Adrenal gland (tissue), 19 donors: ENCODE measurements at regions of chr10 and their contacts with region 1.

Region 1: DNA sequence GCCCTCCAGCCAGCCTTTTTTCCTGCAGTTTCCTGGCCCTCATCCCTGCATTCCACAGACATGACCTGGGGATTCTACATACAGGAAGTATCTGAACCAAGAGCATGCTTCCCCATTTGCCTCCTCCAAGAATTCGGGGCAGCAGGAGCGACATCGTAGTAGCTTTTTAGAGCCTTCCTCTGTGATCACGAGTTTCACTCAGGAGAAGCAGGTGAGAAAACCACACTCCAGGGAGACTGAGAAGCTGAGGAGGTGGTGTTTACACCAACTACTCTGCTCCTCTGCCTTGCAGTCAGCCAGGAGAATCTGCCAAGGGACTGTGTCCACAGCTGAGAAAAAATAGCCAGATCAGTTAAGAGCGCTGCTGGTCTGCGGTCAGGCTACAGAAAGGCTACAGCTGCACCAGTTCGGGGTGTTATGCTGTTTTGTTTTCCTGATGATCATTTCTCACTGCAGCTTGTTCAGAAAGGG is 54.1 kb downstream of the HSPA12A start:
- DNase-seq: no peak
- H3K4me3 ChIP-seq: no peak overlapping the region
- H3K27ac ChIP-seq: peak overlapping the region in 2 of 5 donors; percentile 11 to 13
- H3K4me1 ChIP-seq: peaks cover 0 to 23% of the 10 kb centered on the region in 2 donors
- H3K27me3 ChIP-seq: no peaks in the 10 kb centered on the region
- CTCF ChIP-seq: no peak
- POLR2A ChIP-seq: no peak

Region 2: DNA sequence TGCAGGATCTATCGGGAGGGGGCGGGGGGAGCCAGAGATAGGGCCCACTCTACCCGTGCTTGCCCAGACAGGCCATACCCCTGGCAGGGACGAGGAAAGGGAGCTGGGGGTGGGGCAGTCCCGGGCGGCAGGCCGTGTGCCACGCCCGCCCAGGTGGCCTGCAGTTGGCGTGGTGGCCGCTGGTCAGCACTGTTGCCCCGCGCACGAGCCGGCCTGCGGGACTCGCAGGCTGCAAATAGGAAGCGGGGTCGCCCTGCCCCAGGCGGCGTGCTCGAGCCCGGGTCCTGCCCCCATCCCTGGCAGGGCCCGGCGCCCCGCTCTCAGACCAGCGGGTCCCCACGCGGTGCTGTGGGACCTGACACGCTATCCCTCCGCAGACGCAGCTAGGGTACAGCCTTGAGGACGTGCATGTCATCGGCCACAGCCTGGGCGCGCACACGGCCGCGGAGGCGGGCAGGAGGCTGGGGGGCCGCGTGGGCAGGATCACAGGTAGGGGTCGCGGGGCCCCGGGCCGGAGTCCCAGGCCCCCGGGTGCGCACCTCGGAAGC is 60.8 kb before region 1 on chr10:
- intact Hi-C with region 1: loop called in 1 of 2 experiments (anchors 10 kb)
- DNase-seq: peak in 6 of 7 donors; percentile 39 to 53 (median 46)
- H3K4me3 ChIP-seq: peak overlapping the region in 1 of 4 donors; percentile 43
- H3K27ac ChIP-seq: no peak overlapping the region
- H3K4me1 ChIP-seq: peaks cover 0 to 5% of the 10 kb centered on the region in 2 donors
- H3K27me3 ChIP-seq: peaks cover 14% of the 10 kb centered on the region
- CTCF ChIP-seq: peak in 5 of 6 experiments; percentile 42 to 67 (median 50)
- POLR2A ChIP-seq: no peak

Region 3: GRCh38 chr10:116787893-116788665 is 99.8 kb after region 1 on chr10:
- intact Hi-C with region 1: loop called (anchors 2 to 5 kb)
- DNase-seq: peak; percentile 68 to 91 (median 82)
- H3K4me3 ChIP-seq: peak overlapping the region in 1 of 4 donors; percentile 30
- H3K27ac ChIP-seq: peak overlapping the region in 2 of 5 donors; percentile 48 to 70
- H3K4me1 ChIP-seq: peaks cover 0 to 10% of the 10 kb centered on the region in 2 donors
- H3K27me3 ChIP-seq: peaks cover 4% of the 10 kb centered on the region
- CTCF ChIP-seq: peak; percentile 94 to 100 (median 98)
- POLR2A ChIP-seq: no peak

Region 4: GRCh38 chr10:117174439-117175214 is 486.4 kb after region 1 on chr10:
- intact Hi-C with region 1: loop called in 1 of 2 experiments (anchors 5 kb)
- DNase-seq: peak; percentile 66 to 92 (median 75)
- H3K4me3 ChIP-seq: peak overlapping the region in 1 of 4 donors; percentile 27
- H3K27ac ChIP-seq: no peak overlapping the region
- H3K4me1 ChIP-seq: peaks cover 0 to 9% of the 10 kb centered on the region in 2 donors
- H3K27me3 ChIP-seq: peaks cover 45% of the 10 kb centered on the region
- CTCF ChIP-seq: peak; percentile 74 to 83 (median 78)
- POLR2A ChIP-seq: no peak